Activated naive CD4-positive, alpha-beta T cell treated with anti-CD3 and anti-CD28 coated beads for 36 hours (primary cell): ENCODE measurements at regions of chr20 and their contacts with region 1.

Region 1: GRCh38 chr20:36199345-36200257 is 36.7 kb upstream of the AAR2 start:
- DNase-seq: peak; percentile 89
- H3K4me3 Mint-ChIP-seq: no peak overlapping the region
- H3K27ac Mint-ChIP-seq: no peak overlapping the region
- H3K4me1 Mint-ChIP-seq: peaks cover 4% of the 10 kb centered on the region
- H3K27me3 Mint-ChIP-seq: no peaks in the 10 kb centered on the region

Region 2: GRCh38 chr20:36050436-36051317 is 148.9 kb before region 1 on chr20:
- CTCF ChIA-PET with region 1: no interaction called
- intact Hi-C with region 1: no loop called
- DNase-seq: peak; percentile 95
- H3K4me3 Mint-ChIP-seq: peak overlapping the region; percentile 82
- H3K27ac Mint-ChIP-seq: peak overlapping the region; percentile 83
- H3K4me1 Mint-ChIP-seq: peaks cover 35% of the 10 kb centered on the region
- H3K27me3 Mint-ChIP-seq: no peaks in the 10 kb centered on the region

Region 3: GRCh38 chr20:36154700-36155628 is 44.6 kb before region 1 on chr20 and contains the start of gene EPB41L1:
- CTCF ChIA-PET with region 1: interaction called, 35 read pairs
- intact Hi-C with region 1: loop called (anchors 1 kb)
- DNase-seq: peak; percentile 20
- H3K4me3 Mint-ChIP-seq: peak within 1 kb of the TSS; percentile 47
- H3K27ac Mint-ChIP-seq: no peak within 1 kb of the TSS
- H3K4me1 Mint-ChIP-seq: peaks cover 4% of the 10 kb centered on the region
- H3K27me3 Mint-ChIP-seq: peaks cover 20% of the 10 kb centered on the region
- total RNA-seq, gene EPB41L1: 0.57 to 1.1 TPM

Region 4: GRCh38 chr20:36183155-36183944 is 16.3 kb before region 1 on chr20:
- CTCF ChIA-PET with region 1: interaction called, 14 read pairs
- intact Hi-C with region 1: no loop called
- DNase-seq: no peak
- H3K4me3 Mint-ChIP-seq: no peak overlapping the region
- H3K27ac Mint-ChIP-seq: no peak overlapping the region
- H3K4me1 Mint-ChIP-seq: no peaks in the 10 kb centered on the region
- H3K27me3 Mint-ChIP-seq: no peaks in the 10 kb centered on the region

Region 5: GRCh38 chr20:36214684-36215256 is 15.2 kb after region 1 on chr20:
- CTCF ChIA-PET with region 1: interaction called, 10 read pairs
- intact Hi-C with region 1: no loop called
- DNase-seq: peak; percentile 27
- H3K4me3 Mint-ChIP-seq: no peak overlapping the region
- H3K27ac Mint-ChIP-seq: no peak overlapping the region
- H3K4me1 Mint-ChIP-seq: no peaks in the 10 kb centered on the region
- H3K27me3 Mint-ChIP-seq: no peaks in the 10 kb centered on the region

Region 6: DNA sequence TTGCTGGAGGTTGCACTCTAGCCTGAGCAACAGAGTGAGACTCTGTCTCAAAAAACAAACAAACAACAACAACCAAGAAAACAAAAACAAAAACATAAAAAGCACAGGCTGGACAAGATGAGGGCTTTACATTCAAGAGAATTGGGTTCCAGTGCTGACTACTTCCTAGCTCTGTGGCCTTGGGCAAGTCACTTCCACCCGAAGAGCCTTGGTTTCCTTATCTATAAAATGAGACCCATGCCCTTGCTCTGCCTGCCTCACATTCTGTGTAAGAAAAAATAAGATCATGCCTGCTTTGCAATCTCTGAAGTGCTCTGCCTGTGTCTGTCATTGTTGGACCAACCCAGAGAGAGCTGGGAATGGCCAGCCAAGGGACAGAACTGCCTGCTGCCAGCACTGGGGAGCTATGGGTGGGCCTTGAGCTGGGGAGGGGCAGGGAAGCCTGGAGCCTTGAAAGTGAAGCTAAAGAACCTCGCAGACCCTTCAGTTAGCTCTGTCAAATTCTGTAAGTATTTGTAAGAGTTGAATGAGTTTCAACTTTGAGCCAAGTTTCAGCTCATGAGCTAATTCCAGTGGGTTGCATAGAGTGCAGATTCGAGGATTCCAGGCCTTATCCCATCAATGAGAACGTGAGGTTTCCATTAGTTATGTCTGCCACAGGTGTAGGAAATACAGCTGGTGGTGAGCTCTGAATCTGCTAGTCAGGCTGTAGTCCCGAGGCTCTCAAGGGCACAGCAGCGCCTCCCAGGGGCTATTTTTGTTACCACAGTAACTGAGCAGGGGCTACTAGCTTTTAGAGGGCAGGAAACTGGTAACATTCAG is 199.8 kb after region 1 on chr20:
- CTCF ChIA-PET with region 1: interaction called, 16 read pairs
- intact Hi-C with region 1: loop called (anchors 1 kb)
- DNase-seq: peak; percentile 76
- H3K4me3 Mint-ChIP-seq: no peak overlapping the region
- H3K27ac Mint-ChIP-seq: no peak overlapping the region
- H3K4me1 Mint-ChIP-seq: no peaks in the 10 kb centered on the region
- H3K27me3 Mint-ChIP-seq: peaks cover 27% of the 10 kb centered on the region

Region 7: DNA sequence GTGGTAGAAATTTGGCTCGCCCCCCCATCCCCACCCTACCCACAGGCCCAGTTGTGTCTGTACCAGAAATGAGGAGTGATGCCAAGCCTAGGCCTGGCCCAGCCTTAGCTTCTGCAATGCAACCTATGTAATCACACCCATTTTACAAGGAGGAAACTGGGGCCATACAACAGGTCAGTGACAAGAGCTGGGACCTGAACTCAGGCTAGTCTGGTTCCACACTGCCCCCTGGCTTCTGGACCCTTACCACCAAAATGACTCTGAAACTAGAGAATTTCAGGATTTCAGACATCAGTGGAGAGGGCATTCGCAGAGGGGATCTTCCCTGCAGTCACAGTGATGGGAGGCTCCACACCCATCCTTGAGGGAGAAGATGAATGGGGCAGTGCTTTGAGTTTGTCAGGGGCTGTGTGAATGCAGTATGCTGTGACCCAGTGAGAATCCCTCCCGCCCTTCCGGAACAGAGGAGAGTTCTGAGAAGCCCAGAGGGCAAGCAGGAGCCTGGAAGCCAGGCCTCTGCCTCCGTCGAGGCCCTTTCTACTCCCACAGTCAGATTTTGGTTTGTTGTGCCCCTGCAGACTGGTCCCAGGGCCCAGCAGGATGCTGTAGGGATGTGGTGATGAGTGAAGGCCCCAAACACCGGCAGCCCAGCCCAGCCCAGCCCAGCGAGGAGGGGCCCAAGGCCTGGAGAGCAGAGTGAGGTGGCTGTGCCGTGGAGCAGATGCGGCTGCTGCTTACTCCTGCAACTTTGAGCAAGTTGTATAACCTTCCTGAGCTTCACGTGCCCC is 293.6 kb after region 1 on chr20:
- CTCF ChIA-PET with region 1: no interaction called
- intact Hi-C with region 1: loop called (anchors 2 kb)
- DNase-seq: peak; percentile 71
- H3K4me3 Mint-ChIP-seq: no peak overlapping the region
- H3K27ac Mint-ChIP-seq: no peak overlapping the region
- H3K4me1 Mint-ChIP-seq: peaks cover 28% of the 10 kb centered on the region
- H3K27me3 Mint-ChIP-seq: no peaks in the 10 kb centered on the region